Activated CD4-positive, alpha-beta T cell treated with anti-CD3 and anti-CD28 coated beads for 36 hours (primary cell): ENCODE measurements at regions of chr16 and their contacts with region 1.

Region 1: GRCh38 chr16:88785106-88785924 is at the start of gene PIEZO1:
- DNase-seq: peak; percentile 85
- ATAC-seq: peak; percentile 5
- H3K4me3 Mint-ChIP-seq: peak within 1 kb of the TSS; percentile 66
- H3K27ac Mint-ChIP-seq: peak within 1 kb of the TSS; percentile 78
- H3K4me1 Mint-ChIP-seq: peaks cover 44% of the 10 kb centered on the region
- H3K27me3 Mint-ChIP-seq: no peaks in the 10 kb centered on the region
- total RNA-seq, gene PIEZO1: 105 to 126 TPM

Region 2: DNA sequence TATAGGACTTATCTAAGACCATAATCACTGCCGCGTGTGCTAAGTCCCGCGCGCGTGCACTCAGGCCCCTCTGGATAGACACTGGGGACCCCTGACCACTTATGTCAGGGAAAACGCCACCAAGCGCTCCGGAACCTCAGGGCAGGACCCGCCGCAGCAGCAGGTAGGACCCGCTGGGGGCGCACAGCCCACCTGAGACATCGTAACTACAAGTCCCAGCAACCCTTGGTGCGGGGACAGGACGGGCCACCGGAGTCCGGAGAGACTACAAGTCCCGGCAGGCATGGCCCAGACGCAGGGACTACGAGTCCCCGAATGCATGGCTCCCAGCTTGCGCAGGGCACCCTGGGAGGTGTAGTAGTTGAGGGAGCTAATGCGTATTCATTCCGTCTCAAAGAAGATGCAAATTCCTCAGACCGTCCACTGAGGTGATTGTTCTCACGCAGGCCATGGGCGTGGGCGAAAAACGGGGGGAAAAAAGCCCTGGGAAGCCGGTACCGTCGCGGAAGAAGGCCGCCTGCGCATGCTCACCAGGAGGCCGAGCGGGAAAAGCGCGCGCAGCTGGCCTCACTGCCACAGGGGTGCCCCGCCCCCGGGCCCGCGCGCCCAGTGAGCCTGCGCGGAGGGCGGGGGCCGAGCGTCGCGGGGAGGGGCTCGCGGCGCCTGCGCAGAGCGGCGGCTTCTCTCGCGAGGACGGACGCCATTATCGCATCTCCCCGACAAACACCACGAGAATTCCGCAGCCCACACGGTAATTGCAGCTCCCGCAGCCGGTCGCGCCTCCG is 834.4 kb before region 1 on chr16 and contains the start of gene BANP:
- CTCF ChIA-PET with region 1: no interaction called
- POLR2A ChIA-PET with region 1: no interaction called
- intact Hi-C with region 1: loop called in 1 of 2 experiments (anchors 10 kb)
- DNase-seq: peak; percentile 98
- ATAC-seq: peak; percentile 96
- H3K4me3 Mint-ChIP-seq: peak within 1 kb of the TSS; percentile 93
- H3K27ac Mint-ChIP-seq: peak within 1 kb of the TSS; percentile 100
- H3K4me1 Mint-ChIP-seq: peaks cover 47% of the 10 kb centered on the region
- H3K27me3 Mint-ChIP-seq: no peaks in the 10 kb centered on the region
- total RNA-seq, gene BANP: 35.2 to 36.1 TPM

Region 3: GRCh38 chr16:88650749-88651275 is 134.5 kb before region 1 on chr16 and contains the start of gene CYBA:
- CTCF ChIA-PET with region 1: no interaction called
- POLR2A ChIA-PET with region 1: no interaction called
- intact Hi-C with region 1: loop called in 1 of 2 experiments (anchors 1 kb)
- DNase-seq: peak; percentile 92
- ATAC-seq: peak; percentile 87
- H3K4me3 Mint-ChIP-seq: peak within 1 kb of the TSS; percentile 85
- H3K27ac Mint-ChIP-seq: peak within 1 kb of the TSS; percentile 93
- H3K4me1 Mint-ChIP-seq: peaks cover 15% of the 10 kb centered on the region
- H3K27me3 Mint-ChIP-seq: no peaks in the 10 kb centered on the region
- total RNA-seq, gene CYBA: 155 to 200 TPM

Region 4: DNA sequence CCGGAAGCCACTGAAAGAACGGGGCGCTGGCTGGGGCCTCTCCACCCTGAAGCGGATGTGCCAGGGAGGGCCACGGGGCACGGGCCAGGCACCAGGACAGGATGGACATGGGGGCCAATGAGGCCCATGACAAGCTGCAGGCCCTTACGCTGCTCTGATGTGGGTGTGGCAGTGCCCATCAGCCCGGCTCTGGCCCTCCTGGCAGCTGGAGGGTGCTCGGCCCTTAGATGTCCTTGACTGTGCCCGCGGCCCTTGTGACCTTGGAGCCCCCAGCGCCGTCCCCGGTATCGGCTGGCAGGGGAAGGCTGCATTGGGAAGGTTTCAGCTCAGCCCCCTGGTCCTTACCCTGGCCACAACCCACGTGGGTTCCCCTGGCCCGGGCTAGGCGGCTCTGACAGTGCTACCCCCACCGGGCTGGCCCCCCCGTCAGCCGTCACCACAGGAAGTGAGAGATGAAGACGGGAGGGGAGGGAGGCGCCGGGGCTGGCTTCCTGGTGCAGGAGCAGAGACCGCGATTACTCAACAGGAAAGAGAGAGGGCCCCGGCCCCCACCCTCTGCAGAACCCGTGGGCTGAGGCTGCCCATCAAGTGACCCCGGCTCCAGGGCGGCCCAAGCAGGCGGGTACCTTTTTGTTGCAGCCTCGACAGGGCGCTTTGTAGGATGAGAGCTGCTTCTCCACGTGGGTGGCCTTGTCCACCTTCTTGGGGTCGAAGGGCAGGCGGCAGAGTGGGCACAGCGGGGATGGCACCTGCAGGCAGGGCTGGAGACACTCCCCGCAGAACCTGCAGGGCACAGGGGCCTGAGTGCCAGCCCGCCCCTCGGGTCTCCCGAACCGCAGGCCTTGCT is 84.5 kb before region 1 on chr16:
- CTCF ChIA-PET with region 1: interaction called, 3 read pairs
- POLR2A ChIA-PET with region 1: interaction called, 3 read pairs
- intact Hi-C with region 1: loop called (anchors 1 kb)
- DNase-seq: peak; percentile 98
- ATAC-seq: peak; percentile 80
- H3K4me3 Mint-ChIP-seq: peak overlapping the region; percentile 92
- H3K27ac Mint-ChIP-seq: peak overlapping the region; percentile 97
- H3K4me1 Mint-ChIP-seq: peaks cover 55% of the 10 kb centered on the region
- H3K27me3 Mint-ChIP-seq: no peaks in the 10 kb centered on the region

Region 5: DNA sequence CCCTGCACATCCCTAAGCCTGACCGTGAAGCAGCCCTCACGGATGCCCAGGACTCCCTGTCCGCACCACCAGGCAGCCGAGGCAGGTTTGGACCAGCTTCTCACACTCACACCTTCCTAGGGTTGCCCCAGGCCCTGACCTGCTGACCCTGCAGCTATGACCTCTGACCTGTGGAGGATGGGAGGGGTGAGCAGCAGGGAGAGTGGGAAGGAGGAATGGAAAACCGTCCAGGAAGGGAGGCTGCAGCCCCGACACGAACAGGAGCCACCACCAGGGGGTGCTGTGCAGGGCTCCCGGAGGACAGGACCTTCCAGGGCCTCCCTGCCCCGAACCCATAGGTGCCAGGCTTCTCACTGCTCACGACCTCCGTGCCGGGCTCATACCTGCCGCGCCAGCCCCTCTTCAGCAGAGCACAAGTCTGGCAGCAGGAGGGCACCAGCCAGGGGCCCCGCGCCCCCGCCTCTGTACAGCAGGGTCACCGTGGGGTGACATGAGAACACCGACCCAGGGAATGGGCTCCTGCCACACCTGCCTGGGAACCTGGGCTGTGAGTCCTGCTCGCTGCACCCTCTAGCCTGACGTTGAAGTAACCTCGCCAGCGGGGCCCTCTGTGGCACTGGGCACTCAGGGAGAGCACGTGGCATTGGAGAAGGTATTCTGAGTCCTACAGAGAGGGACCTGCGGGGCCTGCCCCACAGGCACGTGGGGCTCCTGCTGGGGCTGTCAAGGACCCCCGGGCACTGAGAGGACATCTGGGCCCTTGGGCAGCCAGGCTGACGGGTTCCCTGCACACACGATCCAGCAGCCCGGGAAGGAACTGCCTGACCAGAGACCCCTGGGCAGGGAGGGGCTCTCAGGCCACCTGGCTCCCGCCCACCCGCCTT is 41.4 kb before region 1 on chr16:
- CTCF ChIA-PET with region 1: interaction called, 11 read pairs
- POLR2A ChIA-PET with region 1: no interaction called
- intact Hi-C with region 1: loop called (anchors 1 kb)
- DNase-seq: peak; percentile 86
- ATAC-seq: peak; percentile 32
- H3K4me3 Mint-ChIP-seq: no peak overlapping the region
- H3K27ac Mint-ChIP-seq: no peak overlapping the region
- H3K4me1 Mint-ChIP-seq: peaks cover 30% of the 10 kb centered on the region
- H3K27me3 Mint-ChIP-seq: no peaks in the 10 kb centered on the region

Region 6: GRCh38 chr16:88811769-88812512 is 26.6 kb after region 1 on chr16 and contains the start of gene APRT:
- CTCF ChIA-PET with region 1: interaction called, 6 read pairs
- POLR2A ChIA-PET with region 1: interaction called, 13 read pairs
- intact Hi-C with region 1: loop called in 1 of 2 experiments (anchors 1 kb)
- DNase-seq: peak; percentile 99
- ATAC-seq: peak; percentile 76
- H3K4me3 Mint-ChIP-seq: peak within 1 kb of the TSS; percentile 86
- H3K27ac Mint-ChIP-seq: peak within 1 kb of the TSS; percentile 94
- H3K4me1 Mint-ChIP-seq: peaks cover 22% of the 10 kb centered on the region
- H3K27me3 Mint-ChIP-seq: no peaks in the 10 kb centered on the region
- total RNA-seq, gene APRT: 105 to 179 TPM